A549 (cell line): ENCODE measurements at regions of chr16 and their contacts with region 1.

Region 1: DNA sequence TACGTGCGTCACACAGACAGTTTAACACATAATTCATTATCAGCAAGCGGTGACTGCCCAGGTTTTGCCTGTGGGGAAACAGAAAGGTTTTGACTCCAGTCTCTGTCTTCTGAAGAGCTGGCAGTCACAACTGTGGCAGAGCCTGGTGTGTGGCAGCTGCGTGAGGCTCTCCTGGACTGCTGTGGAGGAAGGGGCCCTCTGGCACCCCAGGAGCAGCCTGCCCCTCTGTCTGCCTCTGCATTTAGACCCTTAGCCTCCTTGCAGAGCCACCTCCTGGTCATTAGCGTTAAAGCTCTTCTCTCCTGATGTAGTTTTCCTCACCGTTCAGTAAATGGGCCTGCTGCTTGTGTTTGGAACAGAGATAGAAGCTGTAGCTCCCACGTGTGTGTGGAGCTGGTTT is 10.9 kb downstream of the RAB40C start:
- DNase-seq: no peak
- ATAC-seq: peak; percentile 85 to 88
- H3K4me3 ChIP-seq: no peak overlapping the region
- H3K27ac ChIP-seq: no peak overlapping the region
- H3K4me1 ChIP-seq: no peaks in the 10 kb centered on the region
- CTCF ChIP-seq: peak; percentile 19; the same call in 2 of the 3 replicates
- EP300 ChIP-seq: no peak
- POLR2A ChIP-seq: no peak
- RAD21 ChIP-seq: 0 out of 5 replicates have a peak, but pooled peaks of 1 of the 2 experiments have one; percentile 16

Region 2: DNA sequence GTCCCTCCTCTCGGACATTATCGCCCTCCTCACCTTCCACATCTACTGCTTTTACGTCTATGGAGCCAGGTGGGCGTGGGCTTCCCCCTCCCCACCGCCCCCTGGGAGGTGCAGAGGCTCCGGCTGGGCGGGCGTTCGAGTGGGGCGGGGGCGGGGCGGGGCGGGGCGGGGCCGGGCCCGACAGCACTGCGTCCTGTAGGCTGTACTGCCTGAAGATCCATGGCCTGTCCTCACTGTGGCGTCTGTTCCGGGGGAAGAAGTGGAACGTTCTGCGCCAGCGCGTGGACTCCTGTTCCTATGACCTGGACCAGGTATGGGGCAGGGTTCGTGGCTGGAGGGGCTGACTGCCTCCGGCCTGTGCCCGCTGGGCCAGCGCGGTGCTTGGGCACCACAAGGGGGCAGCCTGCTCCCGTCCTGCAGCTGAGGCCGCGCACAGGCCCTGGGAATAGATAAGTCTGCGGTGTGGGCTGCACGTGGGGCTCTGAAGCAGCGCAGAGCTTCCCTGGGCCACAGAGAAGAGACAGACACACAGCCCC is 21.8 kb before region 1 on chr16:
- CTCF ChIA-PET with region 1: interaction called, 12 read pairs
- POLR2A ChIA-PET with region 1: no interaction called
- DNase-seq: peak; percentile 61 to 84
- ATAC-seq: peak; percentile 72 to 89
- H3K4me3 ChIP-seq: 0 out of 3 replicates have a peak overlapping the region, but pooled peaks have one; percentile 29
- H3K27ac ChIP-seq: peak overlapping the region in 1 of 2 experiments; percentile 78; a peak in 2 of 6 replicates
- H3K4me1 ChIP-seq: peaks cover 6% of the 10 kb centered on the region; the same call in 2 of the 3 replicates
- CTCF ChIP-seq: peak; percentile 82
- EP300 ChIP-seq: no peak
- POLR2A ChIP-seq: no peak
- RAD21 ChIP-seq: peak; percentile 82

Region 3: GRCh38 chr16:842061-842476 is 241.3 kb after region 1 on chr16:
- CTCF ChIA-PET with region 1: no interaction called
- POLR2A ChIA-PET with region 1: no interaction called
- DNase-seq: no peak
- ATAC-seq: no peak; a peak in 1 of 6 replicates
- H3K4me3 ChIP-seq: no peak overlapping the region
- H3K27ac ChIP-seq: no peak overlapping the region
- H3K4me1 ChIP-seq: no peaks in the 10 kb centered on the region
- CTCF ChIP-seq: no peak
- EP300 ChIP-seq: no peak
- POLR2A ChIP-seq: no peak
- RAD21 ChIP-seq: no peak